Panc1 (cell line): ENCODE measurements at regions of chr12 and their contacts with region 1.

Region 1: GRCh38 chr12:49740930-49741881 is at the start of gene TMBIM6:
- DNase-seq: peak; percentile 99
- ATAC-seq: peak; percentile 99
- H3K4me3 ChIP-seq: peak within 1 kb of the TSS; percentile 81 to 97
- H3K27ac ChIP-seq: peak within 1 kb of the TSS; percentile 93
- H3K4me1 ChIP-seq: peaks cover 24% of the 10 kb centered on the region; the same call in 1 of the 2 replicates
- H3K27me3 ChIP-seq: no peaks in the 10 kb centered on the region
- CTCF ChIP-seq: peak; percentile 98
- total RNA-seq, gene TMBIM6: 525 TPM

Region 2: DNA sequence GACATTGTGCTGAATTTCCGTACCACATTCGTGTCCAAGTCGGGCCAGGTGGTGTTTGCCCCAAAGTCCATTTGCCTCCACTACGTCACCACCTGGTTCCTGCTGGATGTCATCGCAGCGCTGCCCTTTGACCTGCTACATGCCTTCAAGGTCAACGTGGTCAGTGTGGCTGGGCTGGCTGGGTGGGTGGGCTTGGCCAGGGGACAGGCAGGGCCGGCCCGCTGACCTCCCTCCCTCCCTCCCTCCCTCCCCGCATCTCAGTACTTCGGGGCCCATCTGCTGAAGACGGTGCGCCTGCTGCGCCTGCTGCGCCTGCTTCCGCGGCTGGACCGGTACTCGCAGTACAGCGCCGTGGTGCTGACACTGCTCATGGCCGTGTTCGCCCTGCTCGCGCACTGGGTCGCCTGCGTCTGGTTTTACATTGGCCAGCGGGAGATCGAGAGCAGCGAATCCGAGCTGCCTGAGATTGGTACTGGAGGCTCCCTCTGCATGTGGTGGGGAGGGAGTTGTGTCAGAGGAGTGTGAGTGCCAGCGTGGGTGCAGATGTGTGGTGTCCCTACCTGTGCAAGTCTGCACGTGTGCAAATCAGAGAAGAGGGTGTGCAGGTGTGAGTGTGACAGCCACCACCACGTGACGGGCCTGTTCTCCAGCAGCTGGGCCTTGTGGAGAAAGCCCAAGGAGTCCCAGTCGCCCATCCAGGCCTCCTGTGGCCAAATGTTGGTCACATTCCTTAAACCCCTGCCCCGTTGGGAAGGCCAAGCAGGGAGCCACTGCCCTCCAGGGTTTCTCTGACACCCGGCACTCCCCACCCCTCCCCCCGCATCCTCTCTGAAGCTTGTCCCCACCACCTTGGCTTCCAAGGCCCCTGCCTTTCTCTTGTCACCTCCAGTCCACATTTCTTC is 197.0 kb before region 1 on chr12:
- CTCF ChIA-PET with region 1: no interaction called
- POLR2A ChIA-PET with region 1: no interaction called
- in situ Hi-C with region 1: no loop called
- intact Hi-C with region 1: no loop called
- DNase-seq: no peak
- ATAC-seq: no peak
- H3K4me3 ChIP-seq: no peak overlapping the region
- H3K27ac ChIP-seq: no peak overlapping the region
- H3K4me1 ChIP-seq: no peaks in the 10 kb centered on the region; the same call in 1 of the 2 replicates
- H3K27me3 ChIP-seq: peaks cover 3% of the 10 kb centered on the region; the same call in 1 of the 2 replicates
- CTCF ChIP-seq: no peak

Region 3: GRCh38 chr12:49636979-49637755 is 104.0 kb before region 1 on chr12:
- CTCF ChIA-PET with region 1: interaction called, 12 read pairs
- POLR2A ChIA-PET with region 1: no interaction called
- in situ Hi-C with region 1: no loop called
- intact Hi-C with region 1: loop called (anchors 10 kb)
- DNase-seq: no peak
- ATAC-seq: peak; percentile 89
- H3K4me3 ChIP-seq: no peak overlapping the region
- H3K27ac ChIP-seq: no peak overlapping the region
- H3K4me1 ChIP-seq: no peaks in the 10 kb centered on the region; the same call in 1 of the 2 replicates
- H3K27me3 ChIP-seq: no peaks in the 10 kb centered on the region
- CTCF ChIP-seq: peak; percentile 83

Region 4: GRCh38 chr12:49644620-49644994 is 96.6 kb before region 1 on chr12:
- CTCF ChIA-PET with region 1: interaction called, 3 read pairs
- POLR2A ChIA-PET with region 1: no interaction called
- in situ Hi-C with region 1: no loop called
- intact Hi-C with region 1: loop called (anchors 10 kb)
- DNase-seq: no peak
- ATAC-seq: peak; percentile 83
- H3K4me3 ChIP-seq: no peak overlapping the region
- H3K27ac ChIP-seq: no peak overlapping the region
- H3K4me1 ChIP-seq: peaks cover 3% of the 10 kb centered on the region; the same call in 1 of the 2 replicates
- H3K27me3 ChIP-seq: no peaks in the 10 kb centered on the region
- CTCF ChIP-seq: peak; percentile 95

Region 5: DNA sequence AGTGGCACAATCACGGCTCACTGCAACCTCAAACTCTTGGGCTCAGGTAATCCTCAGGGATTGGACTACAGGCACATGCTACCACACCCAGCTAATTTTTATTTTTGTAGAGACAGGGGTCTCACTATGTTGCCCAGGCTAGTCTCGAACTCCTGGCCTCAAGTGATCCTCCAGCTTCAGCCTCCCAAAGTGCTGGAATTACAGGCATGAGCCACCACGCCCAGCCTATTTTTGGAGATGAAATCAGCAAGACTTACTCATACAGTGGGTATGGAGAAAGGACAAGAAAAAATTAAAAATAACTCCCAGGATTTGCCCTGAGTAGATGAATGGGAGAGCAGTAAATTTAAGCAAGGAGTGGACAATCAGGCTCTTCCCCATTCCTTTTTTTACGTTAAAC is 47.2 kb before region 1 on chr12:
- CTCF ChIA-PET with region 1: no interaction called
- POLR2A ChIA-PET with region 1: interaction called, 10 read pairs
- in situ Hi-C with region 1: no loop called
- intact Hi-C with region 1: no loop called
- DNase-seq: no peak
- ATAC-seq: no peak
- H3K4me3 ChIP-seq: no peak overlapping the region
- H3K27ac ChIP-seq: no peak overlapping the region
- H3K4me1 ChIP-seq: no peaks in the 10 kb centered on the region; the same call in 1 of the 2 replicates
- H3K27me3 ChIP-seq: no peaks in the 10 kb centered on the region
- CTCF ChIP-seq: no peak

Region 6: DNA sequence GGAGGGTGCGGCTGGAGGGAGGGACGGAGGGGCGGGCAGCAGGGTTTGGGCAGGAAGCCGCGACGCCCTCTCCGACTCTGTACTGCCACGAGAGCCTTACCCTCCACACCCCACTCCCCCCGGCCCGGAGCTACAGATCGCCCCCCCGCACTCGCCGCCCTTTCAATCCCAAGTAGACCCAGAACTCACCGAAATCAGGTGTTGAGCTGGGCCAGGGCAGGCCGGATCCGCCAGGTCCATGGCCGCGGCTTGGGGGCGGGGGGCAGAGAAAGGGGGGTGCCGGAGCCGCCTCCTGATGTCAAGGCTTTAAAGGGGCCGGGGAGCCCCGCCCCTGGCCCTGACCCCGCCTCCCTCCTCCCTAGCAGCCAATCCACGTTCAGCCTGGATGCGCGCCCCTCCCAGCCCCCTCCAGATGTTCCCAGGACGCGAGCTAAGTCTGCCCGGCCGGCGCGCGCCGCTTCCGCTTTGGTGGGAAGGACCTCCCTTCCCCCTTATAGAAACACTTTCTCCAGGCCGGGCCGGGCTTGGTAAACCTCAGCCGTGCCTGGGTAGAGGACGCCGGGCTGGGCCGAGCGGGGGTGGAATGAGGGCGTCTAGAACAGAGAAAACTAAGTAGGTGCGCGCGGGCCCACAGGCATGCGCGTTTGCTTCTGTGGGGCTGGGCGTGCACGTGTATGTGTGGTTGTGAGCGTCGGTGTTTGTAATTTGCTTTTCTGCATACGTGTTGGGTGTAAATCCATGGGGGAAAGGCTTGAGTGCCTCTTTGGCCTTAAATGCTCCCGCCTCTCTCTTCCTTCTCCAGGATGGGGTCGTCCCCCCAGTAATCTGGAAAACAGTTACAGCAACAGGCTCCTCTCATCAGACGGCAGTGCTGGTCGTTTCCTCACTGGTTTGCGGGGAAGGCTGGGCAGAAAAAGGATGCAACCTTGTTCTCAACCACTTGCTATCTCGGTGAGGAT is 87.2 kb after region 1 on chr12 and contains the start of gene NCKAP5L:
- CTCF ChIA-PET with region 1: no interaction called
- POLR2A ChIA-PET with region 1: interaction called, 11 read pairs
- in situ Hi-C with region 1: no loop called
- intact Hi-C with region 1: no loop called
- DNase-seq: no peak
- ATAC-seq: peak; percentile 97
- H3K4me3 ChIP-seq: peak within 1 kb of the TSS; percentile 65 to 67
- H3K27ac ChIP-seq: peak within 1 kb of the TSS; percentile 83
- H3K4me1 ChIP-seq: peaks cover 21% of the 10 kb centered on the region
- H3K27me3 ChIP-seq: no peaks in the 10 kb centered on the region
- CTCF ChIP-seq: no peak
- total RNA-seq, gene NCKAP5L: 17.3 TPM